ENCODE measurements at regions of chr2 and their contacts with region 1.

Region 1: GRCh38 chr2:113922784-113923183 is 32.9 kb downstream of the ACTR3 start:
- DNase-seq: no peak
- H3K4me3 Mint-ChIP-seq: no peak overlapping the region
- H3K27ac Mint-ChIP-seq: no peak overlapping the region
- H3K4me1 Mint-ChIP-seq: peaks cover 15% of the 10 kb centered on the region
- H3K27me3 Mint-ChIP-seq: no peaks in the 10 kb centered on the region

Region 2: DNA sequence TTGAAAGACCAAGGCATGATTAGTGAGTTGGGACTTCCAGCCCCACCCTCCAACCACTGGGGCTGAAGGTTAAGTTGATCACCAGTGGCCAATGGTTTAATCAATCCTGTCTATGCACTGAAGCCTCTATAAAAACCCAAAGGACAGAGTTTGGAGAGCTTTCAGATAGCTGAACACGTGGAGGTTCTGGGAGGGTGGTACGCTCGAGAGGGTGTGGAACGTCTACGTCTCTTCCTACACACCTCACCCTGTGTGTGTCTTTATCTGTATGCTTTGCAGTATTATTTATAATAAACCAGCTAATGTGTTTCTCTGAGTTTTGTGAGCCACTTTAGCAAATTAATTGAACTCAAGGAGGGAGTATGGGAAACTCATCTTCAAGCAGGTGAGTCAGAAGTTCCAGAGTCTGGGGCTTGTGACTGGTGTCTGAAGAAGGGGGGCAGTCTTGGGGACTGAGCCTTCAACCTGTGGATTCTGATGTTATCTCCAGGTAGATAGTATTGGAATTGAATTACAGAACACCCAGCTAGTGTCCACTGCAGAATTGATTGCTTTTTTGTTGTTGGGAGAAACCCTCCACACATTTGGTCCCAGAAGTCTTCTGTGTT is 12.6 kb before region 1 on chr2:
- CTCF ChIA-PET with region 1: no interaction called
- POLR2A ChIA-PET with region 1: no interaction called
- intact Hi-C with region 1: loop called (anchors 2 kb)
- DNase-seq: peak; percentile 67
- H3K4me3 Mint-ChIP-seq: peak overlapping the region; percentile 6
- H3K27ac Mint-ChIP-seq: peak overlapping the region; percentile 21
- H3K4me1 Mint-ChIP-seq: peaks cover 78% of the 10 kb centered on the region
- H3K27me3 Mint-ChIP-seq: no peaks in the 10 kb centered on the region